Caco-2 (cell line): ENCODE measurements at regions of chr14 and their contacts with region 1.

Region 1: DNA sequence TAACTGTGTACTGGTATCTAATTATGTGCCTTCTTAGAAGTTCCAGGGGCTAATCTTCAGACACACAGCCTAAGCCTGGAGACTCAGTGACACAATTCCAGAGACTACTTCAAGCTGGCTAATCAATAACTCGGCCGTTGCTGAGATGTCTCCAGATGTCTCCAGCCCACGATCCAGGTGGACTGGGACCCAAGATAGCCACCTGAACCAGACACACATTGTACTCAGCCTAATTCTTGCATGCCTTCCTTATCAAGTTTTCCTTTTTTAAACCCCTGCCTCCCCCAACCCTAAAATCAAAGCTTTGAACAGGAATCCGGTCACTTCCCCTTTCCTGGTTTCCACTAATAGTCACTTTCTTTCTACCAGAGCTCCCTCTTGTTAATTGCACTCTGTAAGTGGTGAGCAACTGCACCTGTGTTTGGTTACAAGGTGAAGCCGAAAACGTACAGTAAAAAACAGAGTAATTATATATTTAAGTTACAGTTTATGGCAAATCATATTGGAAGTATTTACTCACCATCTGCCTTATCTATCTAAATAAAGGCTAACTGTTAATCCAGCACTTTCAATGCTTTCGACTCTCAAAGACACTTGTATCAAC is 39.8 kb upstream of the PTGDR start:
- DNase-seq: peak; percentile 77 to 82
- H3K4me3 ChIP-seq: peak overlapping the region; percentile 6; the same call in 1 of the 2 replicates
- H3K4me3 Mint-ChIP-seq: peak overlapping the region; percentile 60
- H3K27ac Mint-ChIP-seq: peak overlapping the region; percentile 75
- H3K4me1 ChIP-seq: peaks cover 16% of the 10 kb centered on the region
- H3K4me1 Mint-ChIP-seq: peaks cover 11% of the 10 kb centered on the region
- H3K27me3 ChIP-seq: no peaks in the 10 kb centered on the region
- H3K27me3 Mint-ChIP-seq: no peaks in the 10 kb centered on the region
- CTCF ChIP-seq: no peak

Region 2: DNA sequence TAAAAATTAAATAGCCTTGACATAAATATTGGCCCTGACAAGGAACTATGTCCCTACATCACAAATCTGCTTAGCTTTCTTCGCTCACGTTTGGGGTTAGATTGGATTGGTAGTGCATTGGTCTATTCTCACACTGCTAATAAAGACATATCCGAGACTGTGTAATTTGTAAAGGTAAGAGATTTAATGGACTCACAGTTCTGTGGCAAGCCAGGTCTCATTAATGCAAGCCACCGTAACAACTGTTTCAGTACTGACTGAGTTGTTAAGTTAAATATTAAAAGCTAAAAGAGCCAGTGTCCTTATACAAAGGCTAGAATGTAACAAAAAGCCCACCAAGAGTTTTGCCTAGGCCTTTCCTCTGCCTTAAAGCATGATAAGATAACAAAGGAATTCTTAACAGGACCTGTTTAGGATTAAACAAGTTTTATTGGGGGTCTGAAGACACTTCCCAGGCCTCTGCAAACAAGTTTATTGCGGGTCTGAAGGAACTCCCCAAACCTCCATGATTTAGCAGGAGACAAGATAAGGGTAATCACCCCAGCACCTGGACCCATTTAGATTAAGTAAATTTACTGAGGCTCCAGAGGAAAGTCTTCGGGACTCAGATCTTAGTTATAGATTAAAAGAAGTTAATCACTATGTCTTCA is 48.5 kb before region 1 on chr14:
- CTCF ChIA-PET with region 1: no interaction called
- POLR2A ChIA-PET with region 1: no interaction called
- intact Hi-C with region 1: loop called (anchors 1 kb)
- DNase-seq: peak; percentile 54 to 57
- H3K4me3 ChIP-seq: no peak overlapping the region
- H3K4me3 Mint-ChIP-seq: no peak overlapping the region
- H3K27ac Mint-ChIP-seq: no peak overlapping the region
- H3K4me1 ChIP-seq: peaks cover 18% of the 10 kb centered on the region
- H3K4me1 Mint-ChIP-seq: peaks cover 12% of the 10 kb centered on the region
- H3K27me3 ChIP-seq: no peaks in the 10 kb centered on the region
- H3K27me3 Mint-ChIP-seq: no peaks in the 10 kb centered on the region
- CTCF ChIP-seq: no peak